Thyroid gland (tissue), 4 donors: ENCODE measurements at regions of chr1 and their contacts with region 1.

Region 1: DNA sequence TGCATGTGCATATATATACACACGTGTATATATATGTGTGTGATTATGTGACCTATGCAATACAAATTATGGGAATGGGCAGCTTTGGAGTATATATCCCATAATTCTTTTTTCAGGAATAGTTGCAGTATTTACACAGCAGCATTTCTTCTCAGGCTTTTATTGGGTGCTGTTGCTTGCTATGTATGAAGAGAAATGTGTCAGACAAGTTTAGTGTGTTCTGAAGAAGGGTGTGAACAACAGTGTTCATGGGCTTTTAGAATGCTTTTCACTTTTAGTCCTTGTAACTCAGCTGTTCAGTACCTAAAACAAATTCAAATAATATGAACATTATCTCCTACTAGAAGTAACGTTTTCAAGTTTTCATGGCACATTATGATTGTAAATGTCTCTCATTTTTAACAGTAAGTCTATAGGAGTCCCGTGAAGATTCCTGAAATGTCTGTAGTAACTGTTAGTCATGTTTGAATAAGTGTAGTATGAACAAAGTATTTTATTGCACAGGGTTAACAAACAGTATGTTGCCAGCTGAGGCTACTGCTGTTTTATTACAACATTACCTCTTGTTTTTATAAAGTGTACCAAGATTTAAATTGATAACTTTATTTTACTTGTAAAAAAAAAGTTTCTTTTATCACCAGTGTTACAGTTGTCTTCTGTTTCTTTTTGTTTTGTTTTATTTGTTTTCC is 42.5 kb downstream of the TMED5 start:
- DNase-seq: no peak
- H3K4me3 ChIP-seq: no peak overlapping the region
- H3K27ac ChIP-seq: no peak overlapping the region
- H3K4me1 ChIP-seq: no peaks in the 10 kb centered on the region
- H3K27me3 ChIP-seq: no peaks in the 10 kb centered on the region
- CTCF ChIP-seq: no peak
- POLR2A ChIP-seq: no peak

Region 2: GRCh38 chr1:93108335-93108734 is 29.4 kb before region 1 on chr1:
- intact Hi-C with region 1: no loop called
- DNase-seq: no peak
- H3K4me3 ChIP-seq: no peak overlapping the region
- H3K27ac ChIP-seq: no peak overlapping the region
- H3K4me1 ChIP-seq: peaks cover 0 to 7% of the 10 kb centered on the region in 2 donors
- H3K27me3 ChIP-seq: no peaks in the 10 kb centered on the region
- CTCF ChIP-seq: no peak
- POLR2A ChIP-seq: no peak

Region 3: GRCh38 chr1:93221913-93222312 is 84.2 kb after region 1 on chr1:
- intact Hi-C with region 1: loop called (anchors 5 kb)
- DNase-seq: no peak
- H3K4me3 ChIP-seq: no peak overlapping the region
- H3K27ac ChIP-seq: no peak overlapping the region
- H3K4me1 ChIP-seq: no peaks in the 10 kb centered on the region
- H3K27me3 ChIP-seq: no peaks in the 10 kb centered on the region
- CTCF ChIP-seq: no peak
- POLR2A ChIP-seq: no peak

Region 4: GRCh38 chr1:93471911-93472310 is 334.2 kb after region 1 on chr1:
- intact Hi-C with region 1: no loop called
- DNase-seq: no peak
- H3K4me3 ChIP-seq: no peak overlapping the region
- H3K27ac ChIP-seq: peak overlapping the region in 2 of 3 donors; percentile 19 to 47
- H3K4me1 ChIP-seq: peaks cover 10 to 16% of the 10 kb centered on the region in 2 donors
- H3K27me3 ChIP-seq: no peaks in the 10 kb centered on the region
- CTCF ChIP-seq: no peak
- POLR2A ChIP-seq: no peak